Tibial artery (tissue), 4 donors: ENCODE measurements at regions of chr3 and their contacts with region 1.

Region 1: GRCh38 chr3:170542704-170543103 is 43.2 kb downstream of the SLC7A14 start:
- DNase-seq: no peak
- H3K4me3 ChIP-seq: no peak overlapping the region
- H3K27ac ChIP-seq: no peak overlapping the region
- H3K4me1 ChIP-seq: no peaks in the 10 kb centered on the region
- H3K27me3 ChIP-seq: no peaks in the 10 kb centered on the region
- CTCF ChIP-seq: no peak

Region 2: DNA sequence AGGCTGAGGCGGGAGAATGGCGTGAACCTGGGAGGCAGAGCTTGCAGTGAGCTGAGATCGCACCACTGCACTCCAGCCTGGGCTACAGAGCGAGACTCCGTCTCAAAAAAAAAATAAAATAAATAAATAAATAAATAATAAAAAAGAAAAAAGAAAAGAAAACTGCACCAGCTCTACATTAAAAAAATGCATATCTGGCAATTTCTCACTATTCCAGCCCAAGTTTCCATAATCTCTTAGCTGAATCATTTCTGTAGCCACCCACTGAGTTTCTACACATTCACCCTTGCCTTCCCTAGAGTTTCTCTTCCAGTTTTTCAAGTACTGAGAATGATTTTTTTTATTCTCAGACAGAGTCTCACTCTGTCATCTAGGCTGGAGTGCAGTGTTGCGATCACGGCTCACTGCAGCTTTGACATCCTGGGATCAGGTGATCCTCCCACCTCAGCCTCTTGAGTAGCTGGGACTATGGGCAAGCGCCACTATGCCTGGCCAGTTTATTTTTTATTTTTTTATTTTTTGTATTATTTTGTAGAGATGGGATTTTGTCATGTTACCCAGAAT is 67.7 kb after region 1 on chr3:
- intact Hi-C with region 1: loop called (anchors 2 kb)
- DNase-seq: no peak
- H3K4me3 ChIP-seq: no peak overlapping the region
- H3K27ac ChIP-seq: no peak overlapping the region
- H3K4me1 ChIP-seq: peaks cover 0 to 12% (median 7%) of the 10 kb centered on the region in 4 donors
- H3K27me3 ChIP-seq: no peaks in the 10 kb centered on the region
- CTCF ChIP-seq: no peak